GM12878 (cell line): ENCODE measurements at regions of chr5 and their contacts with region 1.

Region 1: DNA sequence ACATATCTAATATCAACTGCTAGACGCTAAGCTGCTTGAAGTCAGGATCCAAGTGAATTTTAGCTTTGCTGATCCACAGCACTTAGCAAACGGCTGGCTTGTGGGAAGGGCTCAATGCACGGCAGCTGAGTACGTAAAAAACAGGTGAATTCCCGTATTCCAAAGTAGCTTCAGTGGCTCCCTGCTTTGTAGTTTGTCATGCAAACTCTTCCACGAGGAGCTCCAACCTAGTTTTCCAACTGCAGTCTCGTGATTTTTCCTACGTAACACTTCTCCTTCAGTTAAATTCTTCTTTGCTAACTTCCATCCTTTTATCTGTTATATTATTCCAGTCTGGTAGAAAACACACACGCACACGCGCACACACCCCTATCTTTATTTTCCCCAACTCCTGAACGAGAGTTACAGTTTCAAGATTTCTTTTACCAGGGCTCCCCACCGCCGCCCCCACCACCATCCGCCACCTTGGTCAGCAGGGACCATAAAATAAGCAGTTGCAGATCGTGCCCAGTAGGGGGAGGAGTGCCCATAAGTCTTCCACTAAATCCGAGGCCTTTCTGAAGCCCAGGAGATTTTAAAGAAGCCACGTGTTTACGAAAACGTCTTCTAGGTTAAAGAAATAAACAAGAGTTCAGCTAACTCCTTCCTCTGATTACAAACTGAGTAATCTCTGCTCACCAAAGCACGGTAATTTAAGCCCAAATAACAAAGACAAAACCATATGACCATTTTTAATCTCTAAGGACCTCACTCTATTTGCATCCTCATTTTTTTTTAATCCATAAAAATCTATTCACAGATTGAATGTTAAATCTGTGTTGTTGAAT is 34.8 kb upstream of the TRIO start:
- DNase-seq: peak; percentile 44
- ATAC-seq: peak; percentile 92
- H3K4me3 ChIP-seq: peak overlapping the region; percentile 51
- H3K27ac ChIP-seq: peak overlapping the region; percentile 64
- H3K4me1 ChIP-seq: peaks cover 22% of the 10 kb centered on the region
- H3K27me3 ChIP-seq: no peaks in the 10 kb centered on the region
- CTCF ChIP-seq: peak; percentile 75 to 81 (median 77)
- EP300 ChIP-seq: no peak
- POLR2A ChIP-seq: no peak
- RAD21 ChIP-seq: peak; percentile 90

Region 2: DNA sequence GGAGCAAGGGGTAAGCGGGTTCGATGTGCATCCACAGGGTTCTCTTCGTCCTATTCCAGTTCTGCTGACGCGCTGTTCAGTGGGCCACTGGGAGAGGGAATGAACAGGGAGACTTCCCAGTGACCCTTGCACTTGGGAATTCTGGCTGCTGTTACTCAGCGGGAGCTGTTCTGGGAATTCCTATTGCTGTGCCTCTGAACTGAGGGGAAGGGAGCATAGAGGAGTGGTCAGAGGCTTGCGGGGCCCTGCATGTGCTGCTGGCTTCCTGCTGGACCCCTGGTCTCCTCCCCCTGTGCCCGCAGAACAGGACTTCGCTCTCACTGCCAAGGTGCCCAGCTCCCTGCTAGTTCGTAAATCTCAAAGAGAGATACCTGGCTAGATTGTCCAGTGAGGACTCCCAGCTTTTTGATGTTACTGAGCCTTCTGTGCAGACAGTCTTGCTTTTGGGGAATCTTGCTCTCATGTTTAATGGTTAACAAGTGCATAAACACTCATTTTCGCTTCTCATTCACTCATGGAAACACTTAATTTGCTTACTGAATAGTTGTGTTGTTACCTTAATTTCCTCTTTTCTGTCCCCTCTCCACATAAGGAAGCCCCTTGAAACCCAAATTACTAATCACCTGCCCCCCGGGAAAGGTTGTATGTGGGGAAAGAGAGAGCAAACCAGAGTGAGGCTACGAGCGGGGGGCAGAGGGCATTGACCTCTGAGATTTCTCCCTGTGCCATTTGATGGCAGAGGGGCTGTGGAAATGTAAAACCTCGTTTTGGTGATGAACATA is 40.7 kb after region 1 on chr5:
- CTCF ChIA-PET with region 1: interaction called, 19 read pairs
- POLR2A ChIA-PET with region 1: interaction called, 7 read pairs
- RAD21 ChIA-PET with region 1: interaction called, 26 read pairs
- SMC1A ChIA-PET with region 1: interaction called, 16 read pairs
- in situ Hi-C with region 1: no loop called
- intact Hi-C with region 1: no loop called
- DNase-seq: no peak
- ATAC-seq: peak; percentile 4
- H3K4me3 ChIP-seq: peak overlapping the region; percentile 52
- H3K27ac ChIP-seq: peak overlapping the region; percentile 66
- H3K4me1 ChIP-seq: peaks cover 57% of the 10 kb centered on the region
- H3K27me3 ChIP-seq: no peaks in the 10 kb centered on the region
- CTCF ChIP-seq: no peak
- EP300 ChIP-seq: peak in 1 of 2 experiments; percentile 28; a peak in 1 of 4 replicates
- POLR2A ChIP-seq: no peak
- RAD21 ChIP-seq: no peak

Region 3: DNA sequence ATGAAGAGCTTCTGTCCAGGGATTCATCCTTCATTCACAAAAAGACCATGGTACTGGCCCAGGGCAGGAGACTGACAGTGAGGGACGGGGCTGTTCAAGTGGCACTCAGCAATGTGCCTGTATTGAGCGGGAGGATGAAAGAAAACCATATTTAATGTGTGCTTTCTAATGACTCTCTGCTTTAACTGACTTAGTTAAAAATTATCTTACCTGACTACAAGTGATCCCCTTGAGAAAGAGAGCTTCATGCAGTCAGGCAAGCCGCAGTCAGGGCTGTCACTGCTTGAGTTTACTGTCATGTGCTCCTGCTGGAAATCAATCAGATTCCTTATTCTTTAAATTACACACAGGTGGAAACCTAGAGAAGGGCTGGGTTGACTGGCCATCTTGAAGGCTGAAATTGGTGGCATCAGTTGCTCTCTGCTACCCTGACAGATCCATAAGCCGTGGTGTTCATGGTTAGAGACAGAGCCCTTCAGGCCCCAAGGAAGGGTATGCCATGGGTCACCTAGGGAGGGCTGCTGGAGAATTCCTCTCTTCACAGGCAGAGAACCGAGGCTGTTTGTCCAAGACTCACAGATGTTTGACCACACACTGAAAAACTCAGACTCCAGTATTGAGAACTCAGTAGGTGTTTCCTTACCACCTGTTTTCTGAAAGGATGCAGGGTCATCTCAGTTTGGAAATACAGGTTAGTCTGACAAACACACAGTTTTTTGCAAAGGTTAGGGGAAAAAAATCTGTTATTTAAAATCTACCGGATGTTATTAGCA is 105.6 kb after region 1 on chr5:
- CTCF ChIA-PET with region 1: interaction called, 67 read pairs
- POLR2A ChIA-PET with region 1: interaction called, 8 read pairs
- RAD21 ChIA-PET with region 1: interaction called, 27 read pairs
- SMC1A ChIA-PET with region 1: interaction called, 74 read pairs
- in situ Hi-C with region 1: loop called (anchors 5 kb)
- intact Hi-C with region 1: loop called (anchors 1 kb)
- DNase-seq: no peak
- ATAC-seq: peak; percentile 29
- H3K4me3 ChIP-seq: peak overlapping the region; percentile 46
- H3K27ac ChIP-seq: peak overlapping the region; percentile 94
- H3K4me1 ChIP-seq: peaks cover 80% of the 10 kb centered on the region
- H3K27me3 ChIP-seq: no peaks in the 10 kb centered on the region
- CTCF ChIP-seq: no peak
- EP300 ChIP-seq: peak in 1 of 2 experiments; percentile 35; a peak in 1 of 4 replicates
- POLR2A ChIP-seq: no peak
- RAD21 ChIP-seq: no peak

Region 4: DNA sequence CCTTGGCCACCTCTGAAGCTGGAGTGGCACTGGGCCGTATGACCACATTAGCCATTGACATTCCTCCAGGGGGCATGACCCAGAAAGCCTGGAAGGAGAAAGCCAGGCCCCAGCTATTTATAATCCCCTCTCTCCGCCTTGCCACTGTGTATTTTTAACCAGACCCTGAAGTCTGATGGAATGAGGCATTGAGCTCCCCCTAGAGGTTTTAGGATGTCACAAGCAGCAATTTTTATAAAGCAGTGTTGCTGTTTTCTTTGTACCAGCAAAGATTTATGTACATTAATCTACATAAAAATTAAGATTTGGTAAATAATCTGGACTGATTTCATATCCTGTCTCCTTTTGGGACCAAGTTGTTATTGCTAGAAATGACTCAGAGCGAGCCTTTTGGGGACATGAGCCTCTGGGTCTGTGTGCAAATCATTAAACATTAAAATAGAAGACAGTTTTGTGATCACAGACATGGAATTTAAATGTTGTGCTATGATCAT is 161.9 kb after region 1 on chr5:
- CTCF ChIA-PET with region 1: interaction called, 137 read pairs
- POLR2A ChIA-PET with region 1: interaction called, 14 read pairs
- RAD21 ChIA-PET with region 1: interaction called, 52 read pairs
- SMC1A ChIA-PET with region 1: interaction called, 81 read pairs
- in situ Hi-C with region 1: loop called (anchors 5 kb)
- intact Hi-C with region 1: loop called (anchors 1 kb)
- DNase-seq: no peak
- ATAC-seq: peak; percentile 80
- H3K4me3 ChIP-seq: no peak overlapping the region
- H3K27ac ChIP-seq: peak overlapping the region; percentile 19; the same call in 1 of the 2 replicates
- H3K4me1 ChIP-seq: peaks cover 20% of the 10 kb centered on the region
- H3K27me3 ChIP-seq: no peaks in the 10 kb centered on the region
- CTCF ChIP-seq: peak; percentile 77 to 78 (median 78)
- EP300 ChIP-seq: no peak
- POLR2A ChIP-seq: no peak
- RAD21 ChIP-seq: peak; percentile 93

Region 5: DNA sequence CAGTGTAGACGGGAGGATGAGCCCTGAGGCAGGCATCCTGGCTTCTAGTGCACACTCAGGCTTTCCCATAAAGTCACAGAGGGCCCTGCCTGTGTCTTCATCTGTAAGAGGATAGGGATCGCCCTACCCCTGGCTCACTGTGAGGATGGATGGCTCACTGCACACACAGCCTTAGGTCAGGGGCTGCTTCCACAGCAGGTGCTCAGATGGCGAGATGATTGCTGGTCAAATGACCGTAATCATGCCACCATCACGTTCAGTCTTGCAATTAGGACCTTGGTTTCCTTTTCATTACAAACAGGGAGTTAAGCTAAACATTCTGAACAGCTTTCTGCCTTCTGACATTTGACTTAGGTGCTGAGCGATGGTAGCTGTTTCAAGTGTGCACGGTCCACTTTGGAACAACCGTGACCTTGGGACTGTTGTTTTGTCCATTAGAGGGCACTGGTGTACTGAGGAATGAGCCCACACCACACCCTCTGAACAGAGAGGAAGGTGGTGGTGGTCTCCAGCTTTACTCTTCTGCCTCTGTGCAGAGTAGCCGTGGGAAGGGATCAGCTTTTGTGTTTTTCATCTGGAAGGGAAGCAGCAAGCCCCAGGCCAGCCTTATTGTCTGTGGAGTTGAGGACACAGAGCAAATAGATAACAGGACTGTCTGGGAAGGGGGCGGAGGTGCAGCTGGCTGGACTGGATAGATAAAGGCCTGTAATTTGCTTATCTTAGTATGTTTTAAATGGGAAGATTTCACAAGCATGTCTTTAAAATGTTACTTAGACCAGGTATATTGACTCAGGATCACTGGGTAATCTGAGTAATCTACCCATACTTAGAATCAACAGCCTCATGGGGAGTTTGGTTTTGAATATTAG is 217.9 kb after region 1 on chr5:
- CTCF ChIA-PET with region 1: interaction called, 11 read pairs
- POLR2A ChIA-PET with region 1: no interaction called
- RAD21 ChIA-PET with region 1: interaction called, 3 read pairs
- SMC1A ChIA-PET with region 1: interaction called, 4 read pairs
- in situ Hi-C with region 1: no loop called
- intact Hi-C with region 1: no loop called
- DNase-seq: no peak
- ATAC-seq: peak; percentile 55
- H3K4me3 ChIP-seq: no peak overlapping the region
- H3K27ac ChIP-seq: no peak overlapping the region
- H3K4me1 ChIP-seq: peaks cover 8% of the 10 kb centered on the region
- H3K27me3 ChIP-seq: no peaks in the 10 kb centered on the region
- CTCF ChIP-seq: peak; percentile 22 to 35 (median 32); a peak in 4 of 6 replicates
- EP300 ChIP-seq: no peak
- POLR2A ChIP-seq: no peak
- RAD21 ChIP-seq: 0 out of 2 replicates have a peak, but pooled peaks have one; percentile 10